A549 (cell line): ENCODE measurements at regions of chr19 and their contacts with region 1.

Region 1: GRCh38 chr19:39138221-39139211 is 12.9 kb downstream of the PAK4 start:
- DNase-seq: no peak
- ATAC-seq: no peak
- H3K4me3 ChIP-seq: no peak overlapping the region
- H3K27ac ChIP-seq: peak overlapping the region in 1 of 2 experiments; percentile 64; a peak in 3 of 6 replicates
- H3K4me1 ChIP-seq: peaks cover 52% of the 10 kb centered on the region
- CTCF ChIP-seq: no peak
- EP300 ChIP-seq: no peak
- POLR2A ChIP-seq: no peak
- RAD21 ChIP-seq: no peak

Region 2: DNA sequence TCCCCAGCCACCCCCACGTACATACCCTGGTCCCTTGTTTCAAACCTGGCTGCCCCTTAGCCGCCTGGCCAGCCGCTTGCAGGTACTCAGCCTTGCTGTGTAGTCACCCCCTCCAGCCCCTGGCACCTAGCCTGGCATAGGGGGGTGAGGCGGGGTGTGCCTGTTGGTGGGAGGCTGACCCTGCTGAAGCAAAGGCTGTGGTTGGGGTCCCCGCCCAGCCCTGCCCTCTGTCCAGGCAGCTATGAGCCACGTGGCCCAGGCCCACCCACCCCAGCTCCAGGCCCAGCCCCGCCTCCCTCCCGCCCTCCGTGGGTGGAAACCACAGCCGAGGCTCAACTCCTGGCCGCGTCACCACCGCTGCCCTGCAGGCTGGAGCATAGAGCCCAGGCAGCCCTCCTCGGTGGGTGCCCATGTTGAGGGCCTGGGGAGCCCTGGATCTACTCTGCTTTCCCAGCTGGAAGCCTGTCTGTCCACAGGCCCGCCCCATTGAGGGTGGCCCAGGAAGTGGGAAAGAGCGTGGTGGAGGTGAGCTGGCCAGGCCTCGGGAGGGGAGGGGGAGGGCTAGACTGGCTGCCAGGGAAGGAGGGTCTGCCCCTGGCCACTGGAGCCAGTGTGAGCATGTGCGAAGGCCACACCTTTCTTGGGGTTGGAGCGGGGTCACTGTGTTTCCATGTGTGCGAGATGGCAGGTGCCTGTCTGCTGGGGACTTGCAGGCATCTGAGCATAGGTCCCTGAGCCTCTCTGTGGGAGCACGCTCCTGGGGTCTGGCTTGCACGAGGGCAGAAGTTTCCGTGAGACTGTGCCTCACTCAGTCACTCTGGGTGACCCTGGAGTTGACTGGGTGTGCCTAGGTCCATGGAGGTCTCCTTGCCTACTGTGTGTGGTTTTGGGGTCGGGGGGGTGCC is 18.1 kb after region 1 on chr19:
- CTCF ChIA-PET with region 1: interaction called, 19 read pairs
- POLR2A ChIA-PET with region 1: no interaction called
- DNase-seq: no peak
- ATAC-seq: no peak; a peak in 1 of 6 replicates
- H3K4me3 ChIP-seq: no peak overlapping the region
- H3K27ac ChIP-seq: peak overlapping the region in 1 of 2 experiments; percentile 64; a peak in 3 of 6 replicates
- H3K4me1 ChIP-seq: peaks cover 42% of the 10 kb centered on the region
- CTCF ChIP-seq: no peak
- EP300 ChIP-seq: no peak
- POLR2A ChIP-seq: no peak
- RAD21 ChIP-seq: no peak